Tibial artery (tissue), 4 donors: ENCODE measurements at regions of chr2 and their contacts with region 1.

Region 1: GRCh38 chr2:64330281-64331113 is 123.5 kb upstream of the LGALSL start:
- DNase-seq: peak; percentile 86 to 87
- H3K4me3 ChIP-seq: peak overlapping the region; percentile 20 to 47
- H3K27ac ChIP-seq: peak overlapping the region; percentile 79 to 83
- H3K4me1 ChIP-seq: peaks cover 0 to 49% (median 45%) of the 10 kb centered on the region in 4 donors
- H3K27me3 ChIP-seq: no peaks in the 10 kb centered on the region
- CTCF ChIP-seq: peak; percentile 93 to 97

Region 2: GRCh38 chr2:64052468-64053241 is 277.8 kb before region 1 on chr2:
- intact Hi-C with region 1: loop called (anchors 5 kb)
- DNase-seq: no peak
- H3K4me3 ChIP-seq: no peak overlapping the region
- H3K27ac ChIP-seq: no peak overlapping the region
- H3K4me1 ChIP-seq: peaks cover 0 to 3% (median 2%) of the 10 kb centered on the region in 4 donors
- H3K27me3 ChIP-seq: no peaks in the 10 kb centered on the region
- CTCF ChIP-seq: no peak

Region 3: GRCh38 chr2:64288321-64289193 is 41.9 kb before region 1 on chr2:
- intact Hi-C with region 1: no loop called
- DNase-seq: no peak
- H3K4me3 ChIP-seq: no peak overlapping the region
- H3K27ac ChIP-seq: peak overlapping the region; percentile 56 to 66
- H3K4me1 ChIP-seq: peaks cover 0 to 57% (median 35%) of the 10 kb centered on the region in 4 donors
- H3K27me3 ChIP-seq: no peaks in the 10 kb centered on the region
- CTCF ChIP-seq: no peak

Region 4: GRCh38 chr2:64488050-64488974 is 157.8 kb after region 1 on chr2:
- intact Hi-C with region 1: loop called (anchors 2 kb)
- DNase-seq: peak; percentile 38 to 75
- H3K4me3 ChIP-seq: no peak overlapping the region
- H3K27ac ChIP-seq: no peak overlapping the region
- H3K4me1 ChIP-seq: peaks cover 0 to 26% (median 14%) of the 10 kb centered on the region in 4 donors
- H3K27me3 ChIP-seq: no peaks in the 10 kb centered on the region
- CTCF ChIP-seq: peak; percentile 78 to 93

Region 5: GRCh38 chr2:64562148-64562784 is 231.8 kb after region 1 on chr2:
- intact Hi-C with region 1: loop called (anchors 2 kb)
- DNase-seq: no peak
- H3K4me3 ChIP-seq: no peak overlapping the region
- H3K27ac ChIP-seq: no peak overlapping the region
- H3K4me1 ChIP-seq: peaks cover 0 to 20% (median 3%) of the 10 kb centered on the region in 4 donors
- H3K27me3 ChIP-seq: no peaks in the 10 kb centered on the region
- CTCF ChIP-seq: peak; percentile 16 to 48

Region 6: DNA sequence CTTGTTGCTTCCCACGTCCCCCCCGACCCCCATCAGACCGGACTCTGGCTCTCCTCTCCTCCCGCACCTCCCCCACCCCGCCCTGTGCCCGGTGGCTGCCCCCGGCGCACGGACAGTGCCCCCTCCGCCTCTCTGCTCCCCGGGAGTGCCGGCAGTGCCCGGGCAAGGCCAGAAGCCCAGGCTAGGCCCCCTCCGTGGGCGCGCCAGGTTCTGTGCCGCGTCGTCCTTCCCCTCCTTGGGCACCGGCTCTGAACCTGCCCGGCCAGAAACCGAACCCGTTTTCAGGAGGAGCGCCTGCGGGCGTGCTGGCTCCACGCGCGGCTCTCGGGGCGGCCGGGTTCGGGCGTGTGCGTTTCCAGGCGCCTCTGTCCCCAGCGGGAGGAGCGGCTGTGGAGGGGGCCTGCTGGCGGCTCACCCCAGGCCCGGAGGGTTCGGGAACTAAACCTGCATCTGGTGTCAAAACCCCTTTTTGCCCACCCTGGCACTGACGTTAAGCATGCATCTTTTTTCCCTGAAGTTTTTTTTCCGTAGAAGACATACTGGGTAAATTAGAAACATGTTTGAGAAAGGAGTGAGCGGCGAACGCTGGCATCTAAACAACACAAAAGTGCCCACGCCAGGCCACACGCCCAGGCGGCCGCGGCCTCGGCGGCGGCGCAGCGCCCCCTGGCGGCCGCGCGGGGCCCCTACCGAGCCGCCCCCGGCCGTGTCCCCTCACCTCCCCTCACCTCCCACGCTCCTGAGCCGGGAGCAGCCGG is 534.8 kb after region 1 on chr2:
- intact Hi-C with region 1: loop called (anchors 5 kb)
- DNase-seq: peak; percentile 65 to 80
- H3K4me3 ChIP-seq: peak overlapping the region; percentile 62 to 64
- H3K27ac ChIP-seq: peak overlapping the region; percentile 65 to 85
- H3K4me1 ChIP-seq: peaks cover 0 to 14% (median 6%) of the 10 kb centered on the region in 4 donors
- H3K27me3 ChIP-seq: no peaks in the 10 kb centered on the region
- CTCF ChIP-seq: peak; percentile 60 to 97